ENCODE measurements at regions of chr9 and their contacts with region 1.

Region 1: DNA sequence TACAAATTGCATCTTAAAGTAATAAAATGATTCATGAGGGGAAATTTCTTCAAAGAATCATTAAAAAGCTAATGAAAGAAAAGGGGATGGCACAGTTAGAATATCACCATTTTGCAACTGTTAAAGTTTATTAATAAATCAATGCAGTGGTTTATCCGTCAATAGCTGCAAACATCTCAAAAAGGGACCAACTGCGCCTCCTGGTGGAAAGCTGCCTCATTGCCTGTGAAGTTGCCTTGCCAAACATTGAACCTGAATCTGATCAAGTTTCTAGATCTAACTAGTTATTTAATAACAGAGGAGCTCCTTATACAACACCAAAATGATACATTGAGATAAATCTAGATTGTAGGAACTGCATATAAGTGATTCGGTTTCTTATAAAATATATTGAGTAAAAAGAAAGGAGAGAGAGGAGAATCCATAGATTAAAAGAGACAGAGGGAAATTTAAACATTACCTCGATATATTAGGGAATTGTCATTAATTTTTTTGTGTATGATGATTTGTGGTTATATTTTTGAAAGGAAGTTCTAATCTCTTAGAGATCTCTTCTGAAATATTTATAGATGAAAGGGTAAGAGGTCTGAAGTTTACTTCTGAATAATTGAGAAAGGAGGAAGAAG is 6.9 kb upstream of the NDUFB6 start:
- DNase-seq: peak; percentile 48
- H3K4me3 ChIP-seq: no peak overlapping the region
- H3K27ac ChIP-seq: no peak overlapping the region
- H3K4me1 ChIP-seq: no peaks in the 10 kb centered on the region
- H3K27me3 ChIP-seq: no peaks in the 10 kb centered on the region
- CTCF ChIP-seq: peak; percentile 50 to 86 (median 81)
- POLR2A ChIP-seq: no peak

Region 2: GRCh38 chr9:32378993-32379729 is 200.7 kb before region 1 on chr9:
- intact Hi-C with region 1: loop called (anchors 2 kb)
- DNase-seq: peak; percentile 37
- H3K4me3 ChIP-seq: no peak overlapping the region
- H3K27ac ChIP-seq: no peak overlapping the region
- H3K4me1 ChIP-seq: no peaks in the 10 kb centered on the region
- H3K27me3 ChIP-seq: no peaks in the 10 kb centered on the region
- CTCF ChIP-seq: peak; percentile 53 to 85 (median 72)
- POLR2A ChIP-seq: no peak

Region 3: DNA sequence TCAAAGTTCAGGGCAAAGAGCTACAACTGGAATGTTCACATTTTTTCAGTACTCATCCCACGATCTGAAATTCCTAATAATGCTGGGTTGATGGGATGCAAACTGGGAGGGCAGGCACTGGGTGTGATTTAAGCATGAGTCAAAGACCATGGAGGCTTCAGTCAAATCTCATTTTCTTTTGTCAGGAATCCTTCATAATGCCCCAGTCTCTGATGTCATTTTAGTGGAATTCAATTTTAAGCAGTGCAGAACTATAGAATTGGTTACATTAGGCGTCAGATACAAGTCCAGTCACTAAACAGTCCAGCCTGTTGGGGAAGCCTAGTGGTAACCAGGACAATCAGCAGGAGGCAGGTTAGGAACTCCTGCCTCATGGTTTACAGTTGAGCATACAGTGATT is 162.5 kb after region 1 on chr9:
- intact Hi-C with region 1: no loop called
- DNase-seq: no peak
- H3K4me3 ChIP-seq: no peak overlapping the region
- H3K27ac ChIP-seq: no peak overlapping the region
- H3K4me1 ChIP-seq: no peaks in the 10 kb centered on the region
- H3K27me3 ChIP-seq: no peaks in the 10 kb centered on the region
- CTCF ChIP-seq: no peak
- POLR2A ChIP-seq: no peak

Measured in prostate gland (tissue), 2 donors.